ENCODE measurements at regions of chr10 and their contacts with region 1.

Region 1: GRCh38 chr10:116787893-116788665 is 45.7 kb upstream of the HSPA12A start:
- DNase-seq: peak; percentile 84
- H3K4me3 Mint-ChIP-seq: peak overlapping the region; percentile 36
- H3K27ac Mint-ChIP-seq: no peak overlapping the region
- H3K4me1 Mint-ChIP-seq: peaks cover 11% of the 10 kb centered on the region
- H3K27me3 Mint-ChIP-seq: peaks cover 34% of the 10 kb centered on the region

Region 2: GRCh38 chr10:116444527-116445142 is 343.4 kb before region 1 on chr10:
- CTCF ChIA-PET with region 1: interaction called, 3 read pairs
- intact Hi-C with region 1: loop called (anchors 5 kb)
- DNase-seq: no peak
- H3K4me3 Mint-ChIP-seq: no peak overlapping the region
- H3K27ac Mint-ChIP-seq: no peak overlapping the region
- H3K4me1 Mint-ChIP-seq: no peaks in the 10 kb centered on the region
- H3K27me3 Mint-ChIP-seq: peaks cover 11% of the 10 kb centered on the region

Region 3: DNA sequence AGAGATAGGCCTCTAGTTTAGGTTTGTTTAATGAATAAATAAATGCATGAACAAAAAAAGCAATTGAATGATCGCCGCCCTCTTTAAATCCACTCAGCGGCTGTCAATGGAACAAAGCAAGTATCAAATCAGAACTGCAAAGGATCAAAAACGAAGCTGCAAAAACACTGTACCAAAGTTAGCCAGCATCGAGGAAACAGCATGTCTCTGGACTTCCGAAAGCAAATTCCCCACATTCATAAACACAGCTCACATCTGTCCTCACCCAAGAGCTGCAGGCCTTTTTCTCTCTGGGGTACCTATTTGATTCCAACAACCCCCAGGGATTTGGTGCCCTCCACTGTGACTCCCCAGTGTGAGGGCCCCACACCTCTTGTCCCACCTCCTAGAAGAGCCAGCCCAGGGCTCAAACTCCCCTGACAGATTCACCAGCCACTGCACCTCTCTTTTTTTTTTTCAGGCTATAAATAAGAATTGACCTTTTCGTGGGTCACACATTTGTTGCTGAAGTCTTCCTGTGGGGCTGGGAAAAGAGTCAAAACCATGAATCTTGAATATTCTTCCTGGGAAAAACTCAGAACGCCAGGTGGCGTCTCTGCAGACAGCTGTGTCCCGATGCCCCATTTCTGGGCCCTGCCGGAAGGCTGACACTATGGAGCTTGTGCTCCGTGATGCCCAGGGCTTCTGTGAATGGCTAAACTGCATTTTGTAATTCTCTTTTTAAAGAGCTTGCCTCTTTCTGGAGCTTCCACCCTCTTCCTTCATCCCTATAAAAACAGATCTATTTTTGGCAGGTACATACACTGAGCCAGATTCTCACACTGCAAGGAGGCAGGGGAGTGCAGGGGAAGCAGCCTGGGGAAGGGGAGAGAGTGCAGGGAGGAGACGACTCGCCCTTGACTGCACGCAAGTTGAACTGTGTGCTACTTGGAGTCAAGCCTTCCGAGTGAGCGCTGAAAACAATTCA is 97.4 kb before region 1 on chr10:
- CTCF ChIA-PET with region 1: interaction called, 25 read pairs
- intact Hi-C with region 1: no loop called
- DNase-seq: no peak
- H3K4me3 Mint-ChIP-seq: no peak overlapping the region
- H3K27ac Mint-ChIP-seq: no peak overlapping the region
- H3K4me1 Mint-ChIP-seq: no peaks in the 10 kb centered on the region
- H3K27me3 Mint-ChIP-seq: peaks cover 55% of the 10 kb centered on the region

Region 4: GRCh38 chr10:116742367-116743265 is 45.5 kb before region 1 on chr10 and contains the start of gene HSPA12A:
- CTCF ChIA-PET with region 1: interaction called, 5 read pairs
- intact Hi-C with region 1: loop called (anchors 2 kb)
- DNase-seq: peak; percentile 50
- H3K4me3 Mint-ChIP-seq: peak within 1 kb of the TSS; percentile 43
- H3K27ac Mint-ChIP-seq: no peak within 1 kb of the TSS
- H3K4me1 Mint-ChIP-seq: peaks cover 1% of the 10 kb centered on the region
- H3K27me3 Mint-ChIP-seq: peaks cover 72% of the 10 kb centered on the region
- total RNA-seq, gene HSPA12A: 0.05 TPM in 1 of 2 experiments, not detected in the other

Region 5: GRCh38 chr10:117167789-117168674 is 380.0 kb after region 1 on chr10:
- CTCF ChIA-PET with region 1: interaction called, 44 read pairs
- intact Hi-C with region 1: no loop called
- DNase-seq: peak; percentile 65
- H3K4me3 Mint-ChIP-seq: no peak overlapping the region
- H3K27ac Mint-ChIP-seq: no peak overlapping the region
- H3K4me1 Mint-ChIP-seq: peaks cover 44% of the 10 kb centered on the region
- H3K27me3 Mint-ChIP-seq: peaks cover 77% of the 10 kb centered on the region

Measured in activated naive CD4-positive, alpha-beta T cell treated with anti-CD3 and anti-CD28 coated beads for 36 hours (primary cell).